Psoas muscle (tissue), 8 donors: ENCODE measurements at regions of chr2 and their contacts with region 1.

Region 1: DNA sequence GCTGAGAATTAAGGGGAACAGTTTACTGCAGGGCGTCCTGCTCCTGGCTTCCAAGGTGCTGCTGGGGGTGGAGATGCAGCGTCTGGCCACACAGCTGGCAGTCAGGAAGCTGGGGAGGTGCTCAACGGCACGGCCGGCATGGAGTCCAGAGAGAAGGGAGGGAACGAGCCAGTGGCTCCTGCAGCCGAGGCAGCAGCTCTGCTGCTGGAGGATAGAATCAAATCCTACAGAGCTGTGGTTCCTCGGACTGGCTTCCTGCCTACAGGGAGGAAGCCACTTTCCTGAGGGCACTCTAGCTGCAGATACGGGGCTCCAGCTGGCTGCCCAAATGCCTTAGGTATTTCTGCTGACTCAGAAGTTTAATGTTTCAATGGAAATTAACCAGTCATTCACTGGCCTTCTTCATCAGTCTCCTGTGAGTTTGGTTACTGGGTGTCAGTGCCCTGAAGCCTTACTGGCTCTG is 266.3 kb downstream of the TWIST2 start:
- DNase-seq: no peak
- ATAC-seq: no peak
- H3K4me3 ChIP-seq: no peak overlapping the region
- H3K27ac ChIP-seq: peak overlapping the region; percentile 30
- H3K4me1 ChIP-seq: peaks cover 17% of the 10 kb centered on the region
- H3K27me3 ChIP-seq: no peaks in the 10 kb centered on the region
- CTCF ChIP-seq: no peak

Region 2: DNA sequence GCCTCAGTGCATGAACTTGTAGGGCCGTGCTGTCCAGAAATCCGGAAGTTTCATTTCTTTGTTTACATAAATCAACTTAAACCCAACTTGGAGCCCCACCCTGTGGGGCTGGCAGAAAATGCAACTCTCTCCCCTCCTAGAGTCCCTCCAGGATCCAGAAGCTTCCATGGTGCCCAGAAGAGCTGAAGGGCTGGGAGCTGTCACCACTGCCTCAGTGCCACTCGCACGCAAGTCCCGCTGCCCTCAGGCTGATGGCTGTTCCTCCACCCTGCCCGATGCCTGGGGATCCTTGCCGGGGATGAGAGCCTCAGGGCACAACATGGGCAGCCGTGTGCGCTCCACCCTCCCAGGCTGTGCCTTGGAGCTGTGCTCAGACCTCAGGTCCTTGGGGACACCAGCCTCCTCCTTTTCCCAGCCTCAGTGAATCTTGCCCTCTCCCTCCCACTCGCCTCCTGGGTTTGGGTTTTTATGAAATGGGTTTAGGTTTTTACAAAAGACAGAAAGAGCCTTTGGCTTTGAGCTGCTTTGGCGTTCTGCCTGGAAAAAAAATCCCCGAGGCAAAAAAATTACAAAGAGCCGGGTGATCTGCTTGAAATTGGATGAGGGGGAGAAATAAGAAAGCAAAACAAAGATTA is 111.1 kb before region 1 on chr2:
- intact Hi-C with region 1: no loop called
- DNase-seq: peak in 1 of 2 donors; percentile 32
- ATAC-seq: no peak
- H3K4me3 ChIP-seq: no peak overlapping the region
- H3K27ac ChIP-seq: no peak overlapping the region
- H3K4me1 ChIP-seq: no peaks in the 10 kb centered on the region
- H3K27me3 ChIP-seq: peaks cover 0 to 63% (median 0%) of the 10 kb centered on the region in 3 donors
- CTCF ChIP-seq: no peak

Region 3: DNA sequence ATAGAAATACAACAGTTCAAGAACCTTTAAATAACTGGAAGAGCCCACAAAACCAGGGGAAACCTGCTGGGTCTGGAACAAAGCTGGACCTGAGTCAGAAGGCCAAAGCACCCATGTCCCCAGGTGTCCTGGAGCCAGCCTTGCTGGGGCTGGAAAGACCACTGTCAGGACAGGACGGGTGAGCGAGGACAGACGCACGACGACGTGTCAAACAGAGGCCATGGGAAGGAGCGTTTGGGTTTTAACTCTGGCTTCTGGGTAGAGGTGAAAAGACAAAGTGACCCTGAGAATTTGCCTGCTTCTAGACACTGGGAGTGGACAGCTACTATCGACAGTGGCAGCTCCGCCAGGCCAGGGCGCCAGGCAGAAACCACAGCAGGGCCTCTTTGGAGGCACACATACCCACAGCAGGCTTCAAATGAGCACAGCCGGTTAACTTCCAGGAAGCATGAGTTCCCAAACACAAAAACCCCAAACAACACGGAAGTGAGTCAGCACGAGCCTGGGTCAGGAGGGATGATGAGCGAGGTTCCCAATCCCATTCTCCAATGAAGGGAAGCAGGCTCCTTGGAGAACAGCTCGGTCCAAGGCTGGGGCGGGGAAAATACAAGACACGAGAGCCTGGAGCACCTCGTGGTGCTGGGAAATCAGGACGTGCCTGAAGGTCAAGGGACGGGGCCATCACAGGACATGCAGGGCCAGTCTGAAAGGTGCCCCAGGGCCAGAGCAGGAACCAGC is 58.2 kb before region 1 on chr2:
- intact Hi-C with region 1: no loop called
- DNase-seq: peak; percentile 9 to 41
- ATAC-seq: no peak
- H3K4me3 ChIP-seq: no peak overlapping the region
- H3K27ac ChIP-seq: no peak overlapping the region
- H3K4me1 ChIP-seq: no peaks in the 10 kb centered on the region
- H3K27me3 ChIP-seq: no peaks in the 10 kb centered on the region
- CTCF ChIP-seq: no peak

Region 4: DNA sequence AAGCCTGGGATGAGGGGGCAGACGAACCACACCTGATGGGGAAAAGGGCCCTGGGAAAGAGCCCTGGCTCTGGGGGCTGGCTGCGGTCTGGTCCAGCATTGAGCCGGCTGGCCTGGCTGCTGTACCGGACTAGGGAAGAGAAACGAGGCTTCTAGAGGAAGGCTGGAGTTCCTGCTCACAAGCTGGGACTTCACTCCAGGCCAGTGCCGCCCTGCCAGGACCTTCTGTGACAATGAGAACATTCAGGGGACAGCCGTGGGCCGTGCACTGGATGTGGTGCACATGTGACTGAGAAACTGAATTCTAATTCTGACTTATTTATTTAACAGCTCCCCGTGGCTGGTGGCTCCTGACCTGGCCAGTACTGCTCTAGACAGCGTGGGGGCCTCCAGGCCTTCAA is 17.4 kb after region 1 on chr2:
- intact Hi-C with region 1: loop called in 1 of 2 experiments (anchors 2 kb)
- DNase-seq: peak; percentile 7 to 49
- ATAC-seq: peak in 1 of 4 donors; percentile 15
- H3K4me3 ChIP-seq: no peak overlapping the region
- H3K27ac ChIP-seq: no peak overlapping the region
- H3K4me1 ChIP-seq: no peaks in the 10 kb centered on the region
- H3K27me3 ChIP-seq: no peaks in the 10 kb centered on the region
- CTCF ChIP-seq: no peak